ENCODE measurements at regions of chr17 and their contacts with region 1.

Region 1: DNA sequence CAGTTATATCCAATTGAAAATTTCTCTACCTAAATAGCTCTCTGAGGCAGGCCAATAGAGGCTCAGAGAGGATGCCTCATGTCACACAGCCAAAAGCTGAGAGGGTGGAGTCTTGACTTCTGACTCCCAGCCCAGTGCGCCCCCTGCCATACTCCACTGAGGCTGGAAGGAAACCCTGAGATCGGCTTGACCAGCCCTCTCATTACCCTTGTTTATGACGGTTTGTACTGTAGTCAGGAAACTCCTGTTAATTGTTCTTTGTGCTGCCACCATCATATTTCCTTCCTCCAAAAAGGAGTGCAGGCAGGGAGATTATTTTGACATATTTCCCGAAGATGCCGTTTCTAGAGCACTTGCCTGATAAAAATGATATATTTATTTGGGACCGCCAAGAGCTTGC is 107.9 kb downstream of the AIPL1 start:
- DNase-seq: peak; percentile 98
- H3K4me3 ChIP-seq: no peak overlapping the region
- H3K27ac ChIP-seq: peak overlapping the region; percentile 73
- H3K4me1 ChIP-seq: peaks cover 13% of the 10 kb centered on the region
- H3K27me3 ChIP-seq: peaks cover 0 to 3% of the 10 kb centered on the region in 2 experiments
- CTCF ChIP-seq: peak; percentile 21 to 58
- POLR2A ChIP-seq: no peak

Region 2: GRCh38 chr17:5825717-5826330 is 501.2 kb before region 1 on chr17:
- CTCF ChIA-PET with region 1: no interaction called
- POLR2A ChIA-PET with region 1: no interaction called
- dilution Hi-C with region 1: no loop called
- intact Hi-C with region 1: loop called (anchors 1 kb)
- DNase-seq: peak; percentile 86
- H3K4me3 ChIP-seq: no peak overlapping the region
- H3K27ac ChIP-seq: peak overlapping the region; percentile 79
- H3K4me1 ChIP-seq: peaks cover 43% of the 10 kb centered on the region
- H3K27me3 ChIP-seq: no peaks in the 10 kb centered on the region
- CTCF ChIP-seq: no peak
- POLR2A ChIP-seq: peak; percentile 6

Region 3: GRCh38 chr17:6069539-6070429 is 257.2 kb before region 1 on chr17 and contains the start of gene WSCD1:
- CTCF ChIA-PET with region 1: interaction called, 5 read pairs
- POLR2A ChIA-PET with region 1: no interaction called
- dilution Hi-C with region 1: no loop called
- intact Hi-C with region 1: loop called (anchors 1 kb)
- DNase-seq: peak; percentile 44
- H3K4me3 ChIP-seq: peak within 1 kb of the TSS; percentile 75 to 87 (median 86)
- H3K27ac ChIP-seq: peak within 1 kb of the TSS; percentile 46
- H3K4me1 ChIP-seq: peaks cover 14% of the 10 kb centered on the region
- H3K27me3 ChIP-seq: peaks cover 10 to 16% of the 10 kb centered on the region in 2 experiments
- CTCF ChIP-seq: no peak
- POLR2A ChIP-seq: no peak
- total RNA-seq, gene WSCD1: 45.7 and 49.4 TPM in 2 replicates

Region 4: DNA sequence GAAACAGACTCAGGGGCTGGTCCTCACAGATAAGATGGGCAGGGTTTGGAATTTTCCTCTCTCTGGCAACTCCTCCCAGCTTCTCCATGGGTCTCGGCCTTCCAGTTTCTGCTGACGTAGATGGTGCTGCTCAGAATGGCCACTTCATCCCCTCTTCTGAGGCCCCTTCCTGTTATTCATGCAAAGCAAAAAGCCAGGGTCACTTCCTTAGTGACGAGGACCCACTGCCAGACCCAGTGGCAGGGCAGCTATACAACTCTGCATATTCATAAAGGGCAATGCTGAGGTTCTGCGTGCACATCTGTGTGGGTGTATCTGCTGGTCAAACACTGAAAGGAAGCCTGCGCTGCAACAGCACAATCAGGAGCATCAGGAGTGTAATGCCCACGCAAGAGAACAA is 148.0 kb before region 1 on chr17:
- CTCF ChIA-PET with region 1: no interaction called
- POLR2A ChIA-PET with region 1: interaction called, 3 read pairs
- dilution Hi-C with region 1: no loop called
- intact Hi-C with region 1: loop called (anchors 1 kb)
- DNase-seq: peak; percentile 98
- H3K4me3 ChIP-seq: no peak overlapping the region
- H3K27ac ChIP-seq: peak overlapping the region; percentile 75
- H3K4me1 ChIP-seq: peaks cover 19% of the 10 kb centered on the region
- H3K27me3 ChIP-seq: no peaks in the 10 kb centered on the region
- CTCF ChIP-seq: no peak
- POLR2A ChIP-seq: no peak

Region 5: GRCh38 chr17:6241996-6242395 is 85.0 kb before region 1 on chr17:
- CTCF ChIA-PET with region 1: no interaction called
- POLR2A ChIA-PET with region 1: no interaction called
- dilution Hi-C with region 1: no loop called
- intact Hi-C with region 1: no loop called
- DNase-seq: no peak
- H3K4me3 ChIP-seq: no peak overlapping the region
- H3K27ac ChIP-seq: no peak overlapping the region
- H3K4me1 ChIP-seq: peaks cover 14% of the 10 kb centered on the region
- H3K27me3 ChIP-seq: no peaks in the 10 kb centered on the region
- CTCF ChIP-seq: no peak
- POLR2A ChIP-seq: no peak

Region 6: GRCh38 chr17:6257336-6257735 is 69.7 kb before region 1 on chr17:
- CTCF ChIA-PET with region 1: no interaction called
- POLR2A ChIA-PET with region 1: no interaction called
- dilution Hi-C with region 1: no loop called
- intact Hi-C with region 1: loop called (anchors 1 kb)
- DNase-seq: peak; percentile 88
- H3K4me3 ChIP-seq: no peak overlapping the region
- H3K27ac ChIP-seq: peak overlapping the region; percentile 100
- H3K4me1 ChIP-seq: peaks cover 33% of the 10 kb centered on the region
- H3K27me3 ChIP-seq: no peaks in the 10 kb centered on the region
- CTCF ChIP-seq: no peak
- POLR2A ChIP-seq: no peak

Measured in endothelial cell of umbilical vein (primary cell).